HepG2 (cell line): ENCODE measurements at regions of chr18 and their contacts with region 1.

Region 1: DNA sequence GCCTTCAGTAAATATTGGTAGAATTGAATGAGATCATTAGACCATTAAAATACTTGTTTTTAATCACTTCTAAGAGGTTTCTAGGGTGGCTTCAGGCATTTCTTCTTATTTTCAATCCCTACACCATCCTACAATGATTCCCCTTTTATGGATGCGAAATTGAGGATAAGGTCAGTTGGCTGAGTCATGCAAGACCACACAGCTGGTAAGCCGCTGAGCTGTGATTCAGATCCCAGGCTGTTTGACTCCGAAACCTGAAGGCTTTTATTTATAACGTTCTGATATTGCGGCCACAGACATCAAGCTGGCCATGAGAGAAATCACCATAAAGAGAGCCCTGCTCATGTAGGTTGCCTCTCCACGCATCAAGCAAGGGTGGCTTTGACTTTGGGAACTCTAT is 133.4 kb downstream of the VAPA start:
- DNase-seq: no peak
- ATAC-seq: no peak
- H3K4me3 ChIP-seq: no peak overlapping the region
- H3K27ac ChIP-seq: no peak overlapping the region
- H3K4me1 ChIP-seq: no peaks in the 10 kb centered on the region
- H3K27me3 ChIP-seq: no peaks in the 10 kb centered on the region
- CTCF ChIP-seq: no peak
- EP300 ChIP-seq: no peak
- POLR2A ChIP-seq: no peak
- RAD21 ChIP-seq: no peak

Region 2: DNA sequence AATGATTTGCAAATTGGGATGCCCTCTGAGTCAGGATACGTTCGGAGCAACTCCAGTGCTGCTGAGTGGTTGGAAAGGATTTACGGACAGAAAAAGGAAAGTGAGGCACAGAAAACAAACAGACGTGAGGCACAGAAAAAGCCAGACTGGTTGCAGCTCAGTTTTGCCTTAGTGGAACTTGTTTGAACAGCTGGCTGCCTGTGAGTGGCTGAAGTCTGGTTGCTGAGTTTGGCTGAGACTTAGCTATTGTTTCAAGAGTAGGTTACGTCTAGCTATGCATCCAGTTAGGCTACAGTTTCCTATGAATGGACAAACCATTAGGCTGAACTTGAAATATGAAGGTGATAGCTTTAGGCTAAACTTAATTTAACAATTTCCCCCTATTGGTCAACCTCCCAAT is 123.1 kb after region 1 on chr18:
- CTCF ChIA-PET with region 1: no interaction called
- POLR2A ChIA-PET with region 1: no interaction called
- in situ Hi-C with region 1: no loop called
- intact Hi-C with region 1: loop called (anchors 5 kb)
- DNase-seq: no peak
- ATAC-seq: no peak
- H3K4me3 ChIP-seq: no peak overlapping the region
- H3K27ac ChIP-seq: no peak overlapping the region
- H3K4me1 ChIP-seq: no peaks in the 10 kb centered on the region
- H3K27me3 ChIP-seq: peaks cover 0 to 2% of the 10 kb centered on the region in 2 experiments; a peak in 3 of 5 replicates
- CTCF ChIP-seq: no peak
- EP300 ChIP-seq: no peak
- POLR2A ChIP-seq: no peak
- RAD21 ChIP-seq: no peak